Ovary (tissue), 10 donors: ENCODE measurements at regions of chr9 and their contacts with region 1.

Region 1: GRCh38 chr9:121059998-121060636 is 10.0 kb upstream of the C5 start:
- DNase-seq: peak in 2 of 5 donors; percentile 20 to 30
- H3K4me3 ChIP-seq: no peak overlapping the region
- H3K27ac ChIP-seq: no peak overlapping the region
- H3K4me1 ChIP-seq: no peaks in the 10 kb centered on the region
- H3K27me3 ChIP-seq: no peaks in the 10 kb centered on the region
- CTCF ChIP-seq: peak; percentile 68 to 71 (median 69)
- EP300 ChIP-seq: no peak
- POLR2A ChIP-seq: no peak

Region 2: DNA sequence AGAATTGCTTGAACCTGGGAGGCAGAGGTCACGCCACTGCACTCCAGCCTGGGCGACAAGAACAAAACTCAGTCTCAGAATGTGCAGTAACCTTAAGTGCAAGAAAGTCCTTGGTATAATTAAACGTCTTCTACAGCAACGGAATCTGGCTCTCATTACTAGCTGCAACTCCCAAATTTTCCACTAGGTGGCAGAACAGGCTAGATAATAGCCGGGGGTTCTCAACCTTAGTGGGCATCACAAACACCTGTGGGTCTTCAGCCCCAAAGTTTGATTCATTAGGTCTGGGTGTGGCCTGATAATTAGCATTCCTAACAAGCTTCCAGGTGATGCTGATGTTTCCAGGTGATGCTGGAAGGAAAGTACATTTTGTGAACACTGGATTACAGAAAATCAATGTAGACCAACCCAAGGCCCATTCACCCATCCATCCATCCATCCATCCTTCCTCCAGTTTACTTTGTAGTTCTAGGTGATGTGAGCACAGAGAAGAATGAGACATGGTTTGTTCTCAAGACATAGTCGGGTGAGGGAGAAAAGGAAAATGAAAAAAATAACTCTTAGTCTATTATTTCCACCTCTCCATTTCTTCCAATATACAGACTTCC is 304.2 kb before region 1 on chr9:
- intact Hi-C with region 1: loop called in 2 of 4 experiments (anchors 10 kb)
- DNase-seq: peak in 4 of 5 donors; percentile 24 to 62 (median 53)
- H3K4me3 ChIP-seq: no peak overlapping the region
- H3K27ac ChIP-seq: peak overlapping the region in 1 of 2 donors; percentile 25
- H3K4me1 ChIP-seq: no peaks in the 10 kb centered on the region
- H3K27me3 ChIP-seq: no peaks in the 10 kb centered on the region
- CTCF ChIP-seq: peak; percentile 75 to 89 (median 80)
- EP300 ChIP-seq: no peak
- POLR2A ChIP-seq: no peak

Region 3: GRCh38 chr9:120767456-120768167 is 292.5 kb before region 1 on chr9:
- intact Hi-C with region 1: loop called in 1 of 4 experiments (anchors 10 kb)
- DNase-seq: no peak
- H3K4me3 ChIP-seq: no peak overlapping the region
- H3K27ac ChIP-seq: no peak overlapping the region
- H3K4me1 ChIP-seq: no peaks in the 10 kb centered on the region
- H3K27me3 ChIP-seq: no peaks in the 10 kb centered on the region
- CTCF ChIP-seq: no peak
- EP300 ChIP-seq: no peak
- POLR2A ChIP-seq: no peak

Region 4: GRCh38 chr9:120875954-120876841 is 183.9 kb before region 1 on chr9:
- intact Hi-C with region 1: loop called in 1 of 4 experiments (anchors 10 kb)
- DNase-seq: peak; percentile 85 to 90 (median 88)
- H3K4me3 ChIP-seq: peak overlapping the region; percentile 52
- H3K27ac ChIP-seq: peak overlapping the region; percentile 97 to 99
- H3K4me1 ChIP-seq: no peaks in the 10 kb centered on the region
- H3K27me3 ChIP-seq: no peaks in the 10 kb centered on the region
- CTCF ChIP-seq: peak in 2 of 3 donors; percentile 7 to 14
- EP300 ChIP-seq: no peak
- POLR2A ChIP-seq: peak; percentile 33